Posterior vena cava (tissue), 2 donors: ENCODE measurements at regions of chr6 and their contacts with region 1.

Region 1: GRCh38 chr6:40568062-40568708 is 19.0 kb downstream of the LRFN2 start:
- DNase-seq: peak; percentile 36

Region 2: DNA sequence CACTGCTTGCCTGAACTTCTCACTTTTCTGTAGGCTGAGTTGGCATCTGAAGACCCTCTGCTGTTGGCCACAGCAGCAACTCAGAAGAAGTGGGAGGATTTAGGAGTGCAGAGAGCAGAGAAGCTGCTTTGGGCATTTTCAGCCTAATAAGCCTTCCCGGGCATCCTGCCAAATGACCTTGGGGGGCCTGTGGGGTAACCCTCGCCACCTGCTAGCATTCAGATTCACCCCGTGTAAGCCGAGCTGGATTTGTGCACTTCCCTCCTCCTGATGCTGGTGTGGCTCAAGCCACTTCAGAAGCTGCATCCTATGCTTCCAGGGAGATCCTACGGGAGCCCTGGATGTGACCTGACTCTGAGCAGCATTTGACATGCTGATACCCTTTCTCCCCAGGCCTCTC is 95.8 kb before region 1 on chr6:
- intact Hi-C with region 1: loop called in 1 of 2 experiments (anchors 1 kb)
- DNase-seq: no peak